ENCODE measurements at regions of chr22 and their contacts with region 1.

Region 1: DNA sequence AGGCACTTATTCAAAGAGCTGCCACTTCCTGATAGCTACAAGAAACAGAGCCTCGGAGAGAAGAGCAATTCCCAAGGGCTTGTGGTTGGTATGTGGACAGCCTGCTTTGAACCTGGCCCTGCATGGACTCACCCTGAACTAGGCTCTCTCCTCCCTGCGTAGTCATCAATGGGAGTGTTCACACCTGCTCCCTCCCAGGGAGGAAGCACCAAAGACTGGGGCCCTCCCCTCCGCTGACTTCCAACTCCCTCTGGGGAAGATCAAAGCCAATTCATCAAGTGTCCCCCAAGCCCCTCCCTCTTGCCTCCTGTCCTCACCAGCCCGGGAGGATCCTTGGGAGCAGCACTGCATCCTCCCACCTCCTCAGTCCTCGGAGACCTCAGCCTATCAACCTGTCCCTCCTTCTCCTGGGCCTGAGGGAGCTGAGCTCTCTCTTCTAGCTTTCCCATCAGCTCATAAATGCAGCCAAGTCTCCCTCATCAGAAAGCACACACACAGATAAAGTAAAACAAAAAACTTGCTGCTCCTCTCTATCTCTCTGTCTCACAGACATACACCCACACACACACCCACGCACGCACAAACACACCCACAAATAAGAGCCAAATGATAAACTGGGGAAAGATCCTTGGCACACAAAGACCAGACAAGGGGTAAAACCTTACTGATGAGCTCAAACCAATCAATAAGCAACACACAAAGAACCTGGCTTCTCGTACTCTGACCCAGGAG is 3.3 kb downstream of the A4GALT start:
- DNase-seq: peak; percentile 72
- H3K4me3 ChIP-seq: peak overlapping the region; percentile 83
- H3K27ac ChIP-seq: peak overlapping the region; percentile 97
- H3K4me1 ChIP-seq: peaks cover 83% of the 10 kb centered on the region
- CTCF ChIP-seq: no peak

Region 2: GRCh38 chr22:42533638-42533977 is 183.8 kb before region 1 on chr22:
- CTCF ChIA-PET with region 1: no interaction called
- POLR2A ChIA-PET with region 1: no interaction called
- intact Hi-C with region 1: loop called (anchors 5 kb)
- DNase-seq: no peak
- H3K4me3 ChIP-seq: peak overlapping the region; percentile 59
- H3K27ac ChIP-seq: peak overlapping the region; percentile 93
- H3K4me1 ChIP-seq: peaks cover 94% of the 10 kb centered on the region
- CTCF ChIP-seq: no peak

Region 3: DNA sequence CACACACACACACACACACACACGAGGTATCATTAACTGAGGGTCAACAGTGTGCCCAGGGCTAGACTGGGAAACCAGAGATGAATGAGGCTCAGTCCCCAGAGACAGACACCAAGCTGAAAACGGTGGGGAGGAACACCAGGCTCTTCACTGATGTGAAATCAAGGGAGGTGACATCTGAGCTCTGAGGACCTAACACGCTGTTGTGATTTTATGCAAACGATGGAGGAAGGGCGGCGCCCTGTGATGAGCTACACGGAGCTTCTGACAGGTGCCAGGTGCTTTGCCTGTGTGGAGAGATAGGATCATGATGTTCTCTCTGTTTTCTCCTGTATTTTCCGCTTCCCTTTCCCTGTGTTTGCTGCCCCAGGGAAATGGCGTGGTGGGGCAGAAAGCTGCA is 61.7 kb before region 1 on chr22:
- CTCF ChIA-PET with region 1: no interaction called
- POLR2A ChIA-PET with region 1: interaction called, 12 read pairs
- intact Hi-C with region 1: no loop called
- DNase-seq: peak; percentile 95
- H3K4me3 ChIP-seq: peak overlapping the region; percentile 27
- H3K27ac ChIP-seq: peak overlapping the region; percentile 75
- H3K4me1 ChIP-seq: peaks cover 43% of the 10 kb centered on the region
- CTCF ChIP-seq: no peak

Region 4: DNA sequence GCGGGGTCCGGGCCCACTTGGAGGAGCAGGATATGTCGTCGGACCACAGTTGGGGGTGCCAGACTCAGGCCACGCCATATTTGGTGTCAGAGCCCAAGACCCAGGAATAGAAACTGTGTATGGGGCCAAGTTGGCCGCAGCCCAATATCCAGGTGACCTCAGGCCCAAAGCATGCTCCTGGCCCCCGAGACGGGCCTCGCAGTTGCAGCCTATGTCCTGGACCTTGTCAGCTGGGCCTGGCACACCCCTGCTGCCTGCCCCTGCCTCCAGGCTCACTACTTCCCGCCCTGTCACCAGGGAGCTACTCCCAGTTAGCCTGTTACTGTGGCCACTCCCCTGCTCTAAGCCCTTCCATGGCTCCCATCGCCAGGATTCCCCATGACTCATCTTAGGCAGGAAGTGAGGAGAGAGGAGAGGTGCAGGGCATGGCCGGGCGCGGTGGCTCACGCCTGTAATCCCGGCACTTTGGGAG is 19.8 kb before region 1 on chr22:
- CTCF ChIA-PET with region 1: no interaction called
- POLR2A ChIA-PET with region 1: interaction called, 4 read pairs
- intact Hi-C with region 1: loop called (anchors 2 kb)
- DNase-seq: no peak
- H3K4me3 ChIP-seq: no peak overlapping the region
- H3K27ac ChIP-seq: peak overlapping the region; percentile 74
- H3K4me1 ChIP-seq: peaks cover 90% of the 10 kb centered on the region
- CTCF ChIP-seq: no peak

Region 5: DNA sequence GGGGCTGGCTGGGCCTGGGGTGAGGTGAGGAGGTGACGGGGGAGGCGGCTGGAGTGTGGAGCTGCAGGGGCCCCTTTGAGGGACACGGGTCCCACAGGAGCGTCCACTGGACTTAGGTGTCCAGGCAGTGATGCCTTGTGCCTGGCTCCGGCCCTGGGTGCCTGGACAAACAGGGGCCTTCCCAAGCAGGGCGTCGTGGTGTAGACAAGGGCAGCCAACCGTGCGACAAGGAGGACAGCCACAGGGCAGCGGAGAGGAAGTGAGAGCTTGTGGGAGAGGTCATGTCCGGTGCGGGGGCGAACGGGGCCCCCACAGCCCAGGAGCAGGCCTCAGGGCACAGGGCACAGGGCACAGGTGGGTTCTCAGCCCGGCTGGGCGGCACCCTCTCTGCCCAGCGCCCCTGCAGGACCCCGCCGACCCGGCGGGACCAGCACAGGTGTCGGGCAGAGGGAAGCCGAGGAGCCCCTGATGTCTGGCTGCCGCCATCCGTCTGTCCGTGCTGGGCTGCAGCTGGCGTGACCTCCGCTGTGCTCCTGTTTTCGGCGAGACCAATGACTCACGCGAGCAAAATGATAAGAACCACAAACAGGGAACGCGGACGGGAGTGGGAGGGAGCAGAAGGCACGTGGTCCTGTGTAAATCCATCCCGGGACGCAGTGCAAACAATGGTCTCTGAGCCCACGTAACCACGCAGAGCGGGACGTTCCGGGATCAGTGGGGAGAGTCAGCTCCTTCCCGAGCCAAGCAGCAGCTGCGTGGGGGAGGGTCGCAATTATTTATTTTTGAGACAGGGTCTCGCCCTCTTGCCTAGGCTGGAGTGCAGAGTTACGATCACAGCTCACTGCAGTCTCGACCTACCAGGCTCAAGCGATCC is 52.4 kb after region 1 on chr22:
- CTCF ChIA-PET with region 1: no interaction called
- POLR2A ChIA-PET with region 1: no interaction called
- intact Hi-C with region 1: loop called (anchors 2 kb)
- DNase-seq: peak; percentile 74
- H3K4me3 ChIP-seq: peak overlapping the region; percentile 18
- H3K27ac ChIP-seq: peak overlapping the region; percentile 44
- H3K4me1 ChIP-seq: peaks cover 58% of the 10 kb centered on the region
- CTCF ChIP-seq: no peak